Esophagus squamous epithelium (tissue), 5 donors: ENCODE measurements at regions of chr18 and their contacts with region 1.

Region 1: GRCh38 chr18:5879479-5879882 is 15.8 kb downstream of the TMEM200C start:
- DNase-seq: no peak
- H3K4me3 ChIP-seq: no peak overlapping the region
- H3K27ac ChIP-seq: no peak overlapping the region
- H3K4me1 ChIP-seq: no peaks in the 10 kb centered on the region
- H3K27me3 ChIP-seq: peaks cover 0 to 38% (median 0%) of the 10 kb centered on the region in 4 donors
- CTCF ChIP-seq: peak; percentile 48 to 79 (median 60)
- POLR2A ChIP-seq: no peak

Region 2: DNA sequence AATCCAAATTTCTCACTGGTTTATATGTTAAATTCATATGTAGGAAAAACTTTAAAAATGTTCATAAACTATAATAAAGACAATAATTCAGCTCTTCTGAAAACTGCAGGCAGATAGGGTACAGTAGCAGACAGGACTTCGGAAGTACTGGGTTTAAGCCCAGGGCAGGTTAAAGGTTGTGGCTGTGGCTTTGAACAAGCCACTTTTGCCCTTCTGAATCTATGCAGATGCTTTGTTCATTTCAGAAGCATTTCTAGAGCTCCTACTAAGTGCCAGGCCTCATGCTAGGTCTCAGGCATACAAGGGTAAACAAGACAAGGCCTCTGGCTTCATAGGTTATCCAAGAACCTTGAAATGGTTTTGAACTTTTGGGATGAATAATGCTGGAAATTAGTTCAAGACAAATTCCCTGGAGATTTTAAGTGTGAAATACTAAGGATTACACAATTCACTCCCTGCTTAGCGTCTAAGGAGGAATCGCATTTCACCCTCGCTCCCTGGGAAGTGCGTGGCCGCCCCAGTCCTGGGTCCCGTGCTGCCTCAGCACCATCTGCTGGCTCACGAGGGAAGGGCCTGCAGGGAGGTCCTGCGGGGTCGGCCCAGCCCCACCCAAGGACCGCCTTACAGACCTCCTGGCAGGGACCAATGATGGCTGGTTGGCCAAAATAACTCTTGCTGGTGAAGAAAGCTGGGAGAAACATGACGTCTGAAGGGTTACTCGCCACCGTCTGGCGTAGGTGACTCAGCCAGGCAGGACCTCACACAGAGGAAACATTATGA is 602.9 kb after region 1 on chr18:
- intact Hi-C with region 1: loop called (anchors 10 kb)
- DNase-seq: no peak
- H3K4me3 ChIP-seq: peak overlapping the region in 1 of 4 donors; percentile 42
- H3K27ac ChIP-seq: no peak overlapping the region
- H3K4me1 ChIP-seq: peaks cover 4 to 34% (median 7%) of the 10 kb centered on the region in 3 donors
- H3K27me3 ChIP-seq: no peaks in the 10 kb centered on the region
- CTCF ChIP-seq: peak; percentile 44 to 84 (median 67)
- POLR2A ChIP-seq: no peak